ENCODE measurements at regions of chr12 and their contacts with region 1.

Region 1: DNA sequence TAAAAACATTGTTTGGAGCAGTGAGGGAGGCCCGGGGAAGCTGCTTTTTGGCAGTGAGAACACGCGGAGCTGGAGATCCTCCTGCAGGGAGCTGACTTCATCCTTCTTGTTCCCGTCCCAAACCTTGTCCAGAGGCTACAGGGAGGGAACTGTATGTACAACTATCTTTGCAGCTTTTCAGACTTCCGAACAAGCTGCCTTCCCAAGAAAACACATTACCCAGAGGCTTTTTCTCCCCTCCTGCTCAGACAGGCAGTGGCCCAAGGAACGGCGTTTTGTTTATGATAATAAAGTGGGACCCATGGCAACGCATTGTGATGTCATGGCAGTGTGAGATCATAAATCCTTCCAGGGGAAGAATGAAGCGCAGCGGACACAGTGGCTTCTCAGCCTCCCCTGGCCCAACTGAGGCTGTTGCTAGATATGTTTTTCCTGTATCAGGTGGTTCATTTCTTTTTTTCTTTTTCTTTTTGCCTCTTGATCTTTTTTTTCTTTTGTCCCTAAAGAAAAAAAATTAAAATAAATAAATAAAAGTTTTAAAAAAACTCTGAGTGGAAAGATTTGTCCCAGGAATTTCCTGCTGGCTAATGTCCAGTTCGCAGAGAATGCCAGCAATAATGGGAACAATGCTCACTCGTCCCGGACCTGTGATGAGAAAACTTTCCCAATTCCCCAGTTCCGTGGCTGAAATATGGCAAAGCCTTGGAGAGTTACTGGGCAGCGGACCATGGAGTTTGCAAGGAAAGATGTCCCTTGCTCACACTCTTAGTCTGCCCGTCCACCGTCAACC is 103.4 kb upstream of the MAP1LC3B2 start:
- DNase-seq: peak; percentile 94
- H3K4me3 ChIP-seq: no peak overlapping the region
- CTCF ChIP-seq: no peak

Region 2: GRCh38 chr12:116389990-116390389 is 65.7 kb before region 1 on chr12:
- in situ Hi-C with region 1: loop called (anchors 5 kb)
- DNase-seq: peak; percentile 95
- H3K4me3 ChIP-seq: no peak overlapping the region
- CTCF ChIP-seq: no peak

Region 3: GRCh38 chr12:116515684-116516083 is 59.9 kb after region 1 on chr12:
- in situ Hi-C with region 1: loop called (anchors 5 kb)
- DNase-seq: no peak
- H3K4me3 ChIP-seq: no peak overlapping the region
- CTCF ChIP-seq: no peak

Region 4: GRCh38 chr12:116559162-116559935 is 103.6 kb after region 1 on chr12 and contains the start of gene MAP1LC3B2:
- in situ Hi-C with region 1: no loop called
- DNase-seq: peak; percentile 50
- H3K4me3 ChIP-seq: no peak within 1 kb of the TSS
- CTCF ChIP-seq: no peak

Measured in astrocyte of the cerebellum (primary cell).